HCT116 (cell line): ENCODE measurements at regions of chr14 and their contacts with region 1.

Region 1: DNA sequence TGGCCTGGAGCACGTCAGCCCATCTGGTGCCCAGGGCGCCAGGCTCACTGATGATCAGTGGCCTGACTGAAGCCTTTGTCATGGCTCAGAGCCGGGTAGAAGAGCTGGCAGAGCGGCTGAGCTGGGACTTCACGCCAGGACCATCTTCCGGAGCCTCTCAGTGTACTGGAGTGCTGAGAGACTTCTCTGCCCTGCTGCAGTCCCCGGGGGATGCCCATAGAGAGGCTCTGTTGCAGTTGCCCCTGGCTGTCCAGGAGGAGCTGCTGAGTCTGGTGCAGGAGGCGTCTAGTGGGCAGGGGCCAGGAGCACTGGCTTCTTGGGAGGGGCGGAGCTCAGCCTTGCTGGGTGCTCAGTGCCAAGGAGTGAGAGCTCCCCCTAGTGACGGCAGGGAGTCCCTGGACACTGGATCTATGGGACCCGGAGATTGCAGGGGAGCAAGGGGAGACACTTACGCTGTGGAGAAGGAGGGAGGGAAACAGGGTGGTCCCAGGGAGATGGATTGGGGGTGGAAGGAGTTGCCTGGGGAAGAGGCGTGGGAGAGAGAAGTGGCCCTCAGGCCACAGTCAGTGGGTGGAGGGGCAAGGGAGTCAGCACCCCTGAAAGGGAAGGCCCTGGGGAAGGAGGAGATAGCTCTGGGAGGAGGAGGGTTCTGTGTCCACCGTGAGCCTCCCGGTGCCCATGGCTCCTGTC is 2.0 kb downstream of the KHNYN start:
- DNase-seq: peak; percentile 92
- ATAC-seq: peak; percentile 73
- H3K4me3 ChIP-seq: peak overlapping the region; percentile 93 to 95; a peak in 3 of 4 replicates
- H3K27ac ChIP-seq: peak overlapping the region; percentile 92
- H3K4me1 ChIP-seq: peaks cover 14 to 33% of the 10 kb centered on the region in 2 experiments
- H3K27me3 ChIP-seq: no peaks in the 10 kb centered on the region
- CTCF ChIP-seq: peak; percentile 96 to 99 (median 97)
- POLR2A ChIP-seq: no peak
- RAD21 ChIP-seq: peak; percentile 96

Region 2: DNA sequence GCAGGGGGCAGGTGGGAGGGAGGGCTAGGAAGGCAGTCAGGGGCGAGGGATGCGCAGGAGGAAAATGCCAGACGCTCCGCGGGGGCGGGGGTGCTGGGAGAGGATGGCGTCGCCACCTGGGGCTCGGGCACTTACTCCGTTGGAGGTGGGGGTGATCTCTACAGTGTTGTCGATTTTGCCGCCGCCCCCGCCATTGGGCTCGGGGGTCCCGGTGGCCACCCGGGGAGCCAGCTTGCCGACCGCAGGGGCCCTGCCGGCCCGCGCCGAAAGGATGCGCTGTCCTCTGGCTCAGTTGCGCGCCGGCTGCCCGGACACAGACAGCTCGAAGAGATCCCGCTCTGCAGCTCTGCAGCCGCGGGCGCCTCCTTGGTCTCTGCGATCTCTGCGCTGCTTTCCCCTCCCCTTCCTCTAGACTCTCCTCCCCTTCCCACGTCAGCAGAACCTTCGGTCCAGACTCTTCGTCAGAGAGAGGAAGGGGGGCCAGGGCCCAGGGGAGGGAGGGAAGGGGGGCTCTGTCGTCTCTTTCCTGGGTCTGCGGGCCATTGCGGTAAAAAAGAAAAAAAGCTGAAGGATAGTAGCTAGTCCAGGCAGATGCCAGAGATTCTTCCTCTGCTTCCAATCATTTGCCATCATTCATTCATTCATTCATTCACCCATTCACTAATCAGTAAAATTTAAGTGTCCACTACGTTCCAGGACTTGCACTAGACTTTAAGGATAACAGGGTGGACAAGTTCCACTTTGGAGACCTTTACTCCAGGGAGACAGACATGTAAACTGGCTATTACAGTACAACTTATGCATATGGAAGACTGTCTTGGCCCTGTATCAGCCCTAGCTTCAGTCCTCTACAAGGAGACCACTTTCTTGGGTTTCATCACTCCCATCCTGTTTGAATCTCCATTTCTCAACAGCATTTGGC is 1078.9 kb before region 1 on chr14 and contains the start of gene SLC22A17:
- CTCF ChIA-PET with region 1: no interaction called
- POLR2A ChIA-PET with region 1: no interaction called
- RAD21 ChIA-PET with region 1: no interaction called
- intact Hi-C with region 1: no loop called
- DNase-seq: peak; percentile 13
- ATAC-seq: peak; percentile 91
- H3K4me3 ChIP-seq: peak within 1 kb of the TSS; percentile 50 to 60
- H3K27ac ChIP-seq: peak within 1 kb of the TSS; percentile 25; the same call in 1 of the 2 replicates
- H3K4me1 ChIP-seq: 0 out of 4 replicates have a peak, but pooled peaks cover 0 to 2% of the 10 kb centered on the region in 2 experiments
- H3K27me3 ChIP-seq: no peaks in the 10 kb centered on the region
- CTCF ChIP-seq: no peak
- POLR2A ChIP-seq: no peak
- RAD21 ChIP-seq: no peak
- total RNA-seq, gene SLC22A17: 5.9 TPM

Region 3: GRCh38 chr14:24215495-24216344 is 216.0 kb before region 1 on chr14 and contains the start of gene MDP1:
- CTCF ChIA-PET with region 1: interaction called, 4 read pairs
- POLR2A ChIA-PET with region 1: interaction called, 3 read pairs
- RAD21 ChIA-PET with region 1: interaction called in 1 of 2 experiments, 3 read pairs
- intact Hi-C with region 1: loop called (anchors 10 kb)
- DNase-seq: peak; percentile 78
- ATAC-seq: peak; percentile 72
- H3K4me3 ChIP-seq: peak within 1 kb of the TSS; percentile 87 to 97
- H3K27ac ChIP-seq: peak within 1 kb of the TSS; percentile 88
- H3K4me1 ChIP-seq: peaks cover 22 to 29% of the 10 kb centered on the region in 2 experiments
- H3K27me3 ChIP-seq: no peaks in the 10 kb centered on the region
- CTCF ChIP-seq: peak; percentile 23 to 64 (median 40); a peak in 3 of 6 replicates
- POLR2A ChIP-seq: peak; percentile 75
- RAD21 ChIP-seq: peak; percentile 61
- total RNA-seq, gene MDP1: 15.9 TPM

Region 4: DNA sequence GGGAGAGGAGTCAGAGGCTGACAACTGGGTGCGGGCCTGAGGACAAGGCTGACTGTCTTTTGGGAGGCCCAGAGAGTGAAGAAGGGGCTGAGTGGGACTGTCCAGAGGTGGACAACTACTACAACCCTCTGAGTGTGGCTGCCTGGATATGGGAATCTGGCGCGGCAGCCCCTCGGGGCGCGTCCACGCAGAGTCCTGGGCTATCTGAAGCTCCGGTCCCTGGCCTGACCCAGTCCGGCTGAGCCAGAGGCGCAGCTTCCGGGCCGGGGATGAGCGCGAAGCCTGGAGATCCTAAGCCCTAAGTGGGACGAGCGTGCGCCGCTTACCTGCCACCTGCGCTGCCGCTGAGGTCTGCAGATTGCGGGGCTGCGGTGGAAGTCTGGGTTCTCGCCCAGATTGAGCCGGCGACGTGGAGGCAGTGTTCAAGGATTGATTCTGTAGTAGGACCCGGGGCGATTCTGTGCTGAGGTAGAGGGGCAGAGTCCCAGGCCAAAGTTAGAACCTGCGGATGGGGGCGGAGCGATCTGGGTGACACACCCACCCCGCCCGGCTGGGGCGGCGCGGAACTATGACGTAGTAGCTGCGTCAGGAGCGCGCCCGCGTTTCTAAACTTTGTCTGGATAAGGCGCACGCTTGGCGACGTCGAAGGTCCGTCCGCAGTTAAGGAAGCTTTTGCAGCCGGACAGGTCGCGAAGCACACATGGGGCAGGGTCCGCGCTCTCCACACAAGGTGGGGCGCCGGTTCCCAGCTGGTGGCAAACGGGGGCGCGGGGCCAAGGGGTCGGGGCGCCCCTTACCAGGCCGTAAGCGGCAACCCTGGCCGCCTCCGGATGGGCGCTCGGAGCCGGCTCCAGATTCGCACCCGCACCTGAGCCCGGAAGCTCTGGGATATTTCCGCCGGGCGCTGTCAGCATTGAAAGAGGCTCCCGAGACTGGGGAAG is 132.2 kb before region 1 on chr14 and contains the starts of genes DHRS1 and NOP9:
- CTCF ChIA-PET with region 1: interaction called, 18 read pairs
- POLR2A ChIA-PET with region 1: interaction called, 3 read pairs
- RAD21 ChIA-PET with region 1: interaction called in 1 of 2 experiments, 4 read pairs
- intact Hi-C with region 1: no loop called
- DNase-seq: peak; percentile 86
- ATAC-seq: peak; percentile 76
- H3K4me3 ChIP-seq: peak within 1 kb of the TSS; percentile 66 to 80
- H3K27ac ChIP-seq: peak within 1 kb of the TSS; percentile 77
- H3K4me1 ChIP-seq: peaks cover 17 to 31% of the 10 kb centered on the region in 2 experiments
- H3K27me3 ChIP-seq: no peaks in the 10 kb centered on the region
- CTCF ChIP-seq: no peak
- POLR2A ChIP-seq: peak; percentile 67
- RAD21 ChIP-seq: no peak
- total RNA-seq, gene DHRS1: 34.7 TPM
- total RNA-seq, gene NOP9: 39.4 TPM

Region 5: GRCh38 chr14:24327303-24327702 is 104.4 kb before region 1 on chr14:
- CTCF ChIA-PET with region 1: interaction called, 162 read pairs
- POLR2A ChIA-PET with region 1: interaction called, 38 read pairs
- RAD21 ChIA-PET with region 1: interaction called, 21 to 25 read pairs
- intact Hi-C with region 1: no loop called
- DNase-seq: no peak
- ATAC-seq: no peak
- H3K4me3 ChIP-seq: no peak overlapping the region
- H3K27ac ChIP-seq: no peak overlapping the region
- H3K4me1 ChIP-seq: no peaks in the 10 kb centered on the region
- H3K27me3 ChIP-seq: no peaks in the 10 kb centered on the region
- CTCF ChIP-seq: no peak
- POLR2A ChIP-seq: no peak
- RAD21 ChIP-seq: no peak

Region 6: DNA sequence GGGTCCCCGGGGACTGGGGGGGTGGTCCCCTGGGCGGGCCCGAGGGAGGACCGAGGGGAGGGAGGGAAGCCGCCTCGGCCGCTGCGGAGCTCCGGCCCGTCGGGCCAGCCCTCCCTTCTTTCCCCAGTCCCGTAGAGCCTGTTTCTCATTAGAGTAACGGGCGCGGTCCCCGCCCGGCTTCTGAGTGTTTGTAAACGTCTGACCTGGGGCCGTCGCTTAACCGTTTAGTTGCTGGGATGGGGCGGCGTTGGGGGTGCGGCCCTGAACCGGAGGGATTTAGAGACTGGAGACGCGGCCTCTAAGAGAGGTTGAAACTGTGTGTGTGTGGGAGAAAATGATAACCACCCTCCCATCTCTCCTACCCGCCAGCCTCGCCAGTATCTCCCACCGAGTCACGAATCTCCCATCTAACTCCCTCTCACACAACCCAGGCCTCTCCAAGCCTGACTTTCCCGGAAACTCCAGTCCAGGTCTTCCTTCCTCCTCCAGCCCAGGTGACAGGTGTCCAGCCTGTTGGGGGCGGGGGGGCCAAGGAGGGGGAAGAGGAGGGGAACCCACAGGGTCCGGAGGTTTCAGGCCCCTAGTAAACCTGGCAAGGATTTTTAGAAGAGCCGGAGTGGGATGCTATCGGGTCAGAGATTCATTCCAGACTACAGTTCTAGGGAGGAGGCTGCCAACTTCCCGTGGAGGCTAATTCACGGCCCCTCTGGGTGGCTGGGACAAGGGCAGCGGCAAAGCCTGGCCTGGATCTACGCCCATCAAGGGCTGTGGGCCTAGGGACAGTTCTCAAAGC is 64.8 kb before region 1 on chr14:
- CTCF ChIA-PET with region 1: interaction called, 84 read pairs
- POLR2A ChIA-PET with region 1: interaction called, 33 read pairs
- RAD21 ChIA-PET with region 1: interaction called, 9 to 18 read pairs
- intact Hi-C with region 1: loop called (anchors 1 kb)
- DNase-seq: peak; percentile 97
- ATAC-seq: peak; percentile 77
- H3K4me3 ChIP-seq: peak overlapping the region; percentile 55 to 64
- H3K27ac ChIP-seq: peak overlapping the region; percentile 89
- H3K4me1 ChIP-seq: peaks cover 15 to 33% of the 10 kb centered on the region in 2 experiments
- H3K27me3 ChIP-seq: no peaks in the 10 kb centered on the region
- CTCF ChIP-seq: no peak
- POLR2A ChIP-seq: no peak
- RAD21 ChIP-seq: no peak